ENCODE measurements at regions of chr17 and their contacts with region 1.

Region 1: DNA sequence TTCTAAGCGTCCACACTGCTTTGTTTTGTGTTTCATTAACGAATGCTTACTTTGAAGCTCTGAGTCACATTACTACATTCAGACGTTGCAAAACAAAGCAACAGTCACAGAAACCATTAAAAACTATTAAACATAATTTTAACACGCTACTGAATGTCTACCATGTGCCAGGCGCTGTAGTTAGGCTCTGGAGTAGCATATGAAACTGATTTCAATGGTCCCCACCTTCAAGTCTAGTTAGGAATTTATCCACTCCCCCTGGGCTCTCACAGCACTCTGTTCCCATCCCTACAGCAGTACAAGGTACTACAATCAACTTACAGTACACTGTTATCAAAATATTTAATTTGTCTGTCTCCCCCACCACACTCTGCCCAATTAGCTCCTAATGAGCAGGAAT is 631 bp downstream of the UTP6 start:
- DNase-seq: no peak
- ATAC-seq: no peak
- H3K4me3 ChIP-seq: peak overlapping the region; percentile 37 to 95 (median 75)
- H3K27ac ChIP-seq: peak overlapping the region in 9 of 12 donors; percentile 37 to 76 (median 65)
- H3K4me1 ChIP-seq: peaks cover 0 to 18% (median 9%) of the 10 kb centered on the region in 12 donors
- H3K27me3 ChIP-seq: no peaks in the 10 kb centered on the region
- CTCF ChIP-seq: no peak
- POLR2A ChIP-seq: no peak

Region 2: GRCh38 chr17:31437720-31438420 is 463.0 kb before region 1 on chr17:
- intact Hi-C with region 1: loop called in 1 of 10 experiments (anchors 5 kb)
- DNase-seq: no peak
- ATAC-seq: peak; percentile 9 to 25 (median 15)
- H3K4me3 ChIP-seq: no peak overlapping the region
- H3K27ac ChIP-seq: no peak overlapping the region
- H3K4me1 ChIP-seq: peaks cover 0 to 6% (median 0%) of the 10 kb centered on the region in 12 donors
- H3K27me3 ChIP-seq: peaks cover 0 to 3% (median 0%) of the 10 kb centered on the region in 9 donors
- CTCF ChIP-seq: no peak
- POLR2A ChIP-seq: no peak

Region 3: DNA sequence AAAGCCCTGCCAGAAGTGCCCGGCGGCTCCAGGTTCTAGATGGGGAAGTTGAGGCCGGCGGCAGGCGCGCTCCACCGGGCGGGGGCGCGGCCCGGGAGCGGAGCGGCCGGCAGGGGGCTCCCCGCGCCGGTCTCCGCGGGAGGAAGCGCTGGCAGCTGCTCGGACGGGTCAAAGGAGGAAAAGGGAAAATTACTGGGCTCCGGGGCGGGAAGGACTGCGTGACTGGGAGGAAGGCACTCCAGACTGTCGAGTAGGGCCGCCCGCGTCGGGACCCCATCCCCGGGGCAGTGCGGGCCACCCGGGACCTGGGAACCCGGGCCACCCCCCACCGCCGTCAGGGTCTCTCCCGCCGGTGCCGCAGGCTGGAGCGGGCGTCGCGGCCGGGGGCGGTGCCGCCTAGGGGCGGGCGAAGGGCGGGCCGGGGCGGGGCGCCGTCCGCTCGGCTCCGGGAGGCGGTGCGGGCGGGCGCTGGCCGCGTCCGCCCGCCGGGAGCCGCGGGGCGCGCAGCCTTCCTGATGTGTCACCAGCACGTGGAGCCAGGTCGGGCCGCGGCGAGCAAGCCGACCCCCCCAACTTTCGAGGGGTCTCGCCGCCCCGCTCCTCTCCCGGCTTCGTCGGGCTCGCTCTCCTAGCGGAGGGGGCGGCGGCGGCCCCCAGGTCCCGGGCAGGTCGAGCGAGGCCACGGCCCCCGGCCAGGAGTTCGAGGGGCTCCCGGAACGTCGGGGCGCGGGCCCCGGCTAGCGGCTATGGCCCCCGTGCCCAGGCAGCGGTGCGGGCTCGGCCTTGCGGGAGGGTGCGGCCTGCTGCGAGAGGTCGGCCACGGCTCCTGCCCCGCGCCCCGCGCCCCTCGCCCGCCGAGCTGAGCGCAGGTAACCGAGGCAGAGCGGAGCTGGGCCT is 341.9 kb before region 1 on chr17:
- intact Hi-C with region 1: loop called in 1 of 10 experiments (anchors 5 kb)
- DNase-seq: peak; percentile 83 to 89 (median 84)
- ATAC-seq: peak; percentile 70 to 94 (median 88)
- H3K4me3 ChIP-seq: peak overlapping the region; percentile 51 to 79 (median 64)
- H3K27ac ChIP-seq: peak overlapping the region; percentile 65 to 96 (median 92)
- H3K4me1 ChIP-seq: peaks cover 0 to 43% (median 32%) of the 10 kb centered on the region in 12 donors
- H3K27me3 ChIP-seq: no peaks in the 10 kb centered on the region
- CTCF ChIP-seq: peak; percentile 56 to 98 (median 92)
- POLR2A ChIP-seq: peak in 1 of 2 donors; percentile 60

Region 4: GRCh38 chr17:31858642-31859473 is 42.0 kb before region 1 on chr17 and contains the start of gene COPRS:
- intact Hi-C with region 1: loop called in 2 of 10 experiments (anchors 5 kb)
- DNase-seq: peak; percentile 91 to 95 (median 94)
- ATAC-seq: peak; percentile 80 to 93 (median 92)
- H3K4me3 ChIP-seq: peak within 1 kb of the TSS; percentile 41 to 95 (median 74)
- H3K27ac ChIP-seq: peak within 1 kb of the TSS; percentile 40 to 91 (median 80)
- H3K4me1 ChIP-seq: peaks cover 0 to 22% (median 17%) of the 10 kb centered on the region in 12 donors
- H3K27me3 ChIP-seq: no peaks in the 10 kb centered on the region
- CTCF ChIP-seq: peak in 6 of 12 donors; percentile 13 to 52 (median 32)
- POLR2A ChIP-seq: peak in 1 of 2 donors; percentile 26
- total RNA-seq, gene COPRS: 39.9 to 104 (median 51.6) TPM

Region 5: DNA sequence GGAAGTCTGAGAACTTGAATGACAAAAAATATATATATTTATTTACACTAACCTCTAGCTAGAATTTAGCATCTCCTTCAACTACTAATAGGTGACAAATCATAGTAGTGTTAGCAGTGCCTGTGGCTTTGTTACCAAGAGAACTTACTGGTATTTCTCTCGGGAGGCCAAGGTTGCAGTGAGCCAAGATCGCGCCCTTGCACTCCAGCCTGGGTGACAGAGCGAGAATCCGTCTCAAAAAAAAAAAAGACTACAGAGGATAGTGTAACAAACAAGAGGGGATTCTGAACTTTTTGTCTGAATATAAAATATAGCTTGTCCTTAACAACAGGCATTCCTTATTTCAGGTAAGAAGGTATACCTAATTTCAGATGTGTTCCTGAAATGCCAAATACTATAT is 34.6 kb after region 1 on chr17:
- intact Hi-C with region 1: loop called in 1 of 10 experiments (anchors 5 kb)
- DNase-seq: no peak
- ATAC-seq: no peak
- H3K4me3 ChIP-seq: no peak overlapping the region
- H3K27ac ChIP-seq: no peak overlapping the region
- H3K4me1 ChIP-seq: peaks cover 0 to 17% (median 10%) of the 10 kb centered on the region in 12 donors
- H3K27me3 ChIP-seq: no peaks in the 10 kb centered on the region
- CTCF ChIP-seq: no peak
- POLR2A ChIP-seq: no peak